Spleen (tissue), 13 donors: ENCODE measurements at regions of chr20 and their contacts with region 1.

Region 1: DNA sequence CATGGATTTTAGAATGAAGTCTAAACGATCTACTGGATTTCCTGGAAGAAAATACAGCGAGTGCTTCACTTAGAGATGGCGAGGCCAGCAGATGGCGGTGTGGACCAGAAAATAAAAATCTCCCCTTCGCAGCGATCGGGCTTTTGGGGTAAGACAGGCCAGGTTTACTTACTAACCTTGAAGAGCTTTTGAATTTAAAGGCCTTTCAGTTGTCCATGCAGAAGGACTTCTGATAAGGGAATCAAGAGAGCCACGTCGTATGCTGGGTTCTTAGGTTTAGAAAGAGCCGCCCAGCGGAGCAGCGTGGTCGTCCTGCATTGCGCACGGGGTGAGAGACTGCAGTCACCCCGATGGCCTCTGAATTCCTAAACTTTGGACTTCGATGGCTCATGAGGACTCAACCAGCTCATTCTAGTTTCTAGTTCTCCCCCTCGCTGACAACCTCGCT is 125.2 kb upstream of the RALGAPA2 start:
- DNase-seq: no peak
- H3K4me3 ChIP-seq: peak overlapping the region in 1 of 8 donors; percentile 11
- H3K27ac ChIP-seq: no peak overlapping the region
- H3K4me1 ChIP-seq: peaks cover 0 to 10% (median 5%) of the 10 kb centered on the region in 6 donors
- H3K27me3 ChIP-seq: peaks cover 0 to 52% (median 3%) of the 10 kb centered on the region in 7 donors
- CTCF ChIP-seq: peak; percentile 9 to 71 (median 43)
- POLR2A ChIP-seq: no peak

Region 2: GRCh38 chr20:21571841-21572690 is 734.5 kb after region 1 on chr20:
- intact Hi-C with region 1: loop called (anchors 5 kb)
- DNase-seq: no peak
- H3K4me3 ChIP-seq: no peak overlapping the region
- H3K27ac ChIP-seq: no peak overlapping the region
- H3K4me1 ChIP-seq: no peaks in the 10 kb centered on the region
- H3K27me3 ChIP-seq: peaks cover 0 to 43% (median 5%) of the 10 kb centered on the region in 7 donors
- CTCF ChIP-seq: peak; percentile 39 to 79 (median 65)
- POLR2A ChIP-seq: no peak